Activated CD4-positive, alpha-beta T cell treated with anti-CD3 and anti-CD28 coated beads, Interleukin-2, amount 10 ng/mL, durations not matched to agents 7 days and 5 days (primary cell): ENCODE measurements at regions of chr7 and their contacts with region 1.

Region 1: DNA sequence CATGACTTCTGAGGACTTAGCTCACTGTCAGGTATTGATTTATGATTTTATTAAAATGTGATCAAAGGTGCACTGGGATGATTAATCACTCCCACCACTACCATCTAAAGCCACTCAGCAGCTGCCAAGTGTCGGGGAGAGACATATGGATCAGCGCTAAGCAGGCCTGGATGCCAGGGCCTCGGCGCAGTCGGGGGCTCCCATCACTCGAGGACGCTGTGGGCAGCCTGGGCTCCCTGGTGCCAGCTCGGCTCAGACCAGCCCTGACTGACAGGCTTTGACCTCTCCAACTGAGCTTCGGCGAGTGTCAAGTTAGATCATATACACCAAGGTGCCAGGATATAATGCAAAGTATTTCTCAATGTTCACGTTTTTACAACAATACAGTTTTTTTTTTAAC is 267.7 kb downstream of the ACTR3B start:
- DNase-seq: no peak
- H3K4me3 Mint-ChIP-seq: no peak overlapping the region
- H3K27ac Mint-ChIP-seq: no peak overlapping the region
- H3K4me1 Mint-ChIP-seq: no peaks in the 10 kb centered on the region
- H3K27me3 Mint-ChIP-seq: no peaks in the 10 kb centered on the region

Region 2: DNA sequence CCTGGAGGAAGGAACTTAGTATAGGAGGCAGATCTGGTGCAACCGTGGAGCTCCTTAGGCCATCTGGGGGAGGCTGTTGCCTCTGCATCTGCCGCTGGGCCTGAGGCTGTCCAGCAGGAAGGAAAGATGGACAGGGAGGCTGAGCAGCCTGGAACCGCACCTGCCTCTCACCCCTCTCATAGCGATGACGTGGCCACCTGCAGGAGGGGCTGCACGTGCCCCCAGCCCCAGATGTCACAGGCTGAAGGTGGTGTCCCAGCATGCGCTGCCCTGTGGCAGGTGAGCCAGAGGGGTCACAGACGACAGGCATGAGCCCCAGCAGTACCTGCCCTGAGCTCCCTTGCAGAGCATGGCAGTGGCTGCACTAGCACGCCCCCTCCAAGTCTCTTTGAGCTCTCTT is 16.2 kb after region 1 on chr7:
- CTCF ChIA-PET with region 1: interaction called, 10 read pairs
- POLR2A ChIA-PET with region 1: no interaction called
- DNase-seq: no peak
- H3K4me3 Mint-ChIP-seq: no peak overlapping the region
- H3K27ac Mint-ChIP-seq: no peak overlapping the region
- H3K4me1 Mint-ChIP-seq: no peaks in the 10 kb centered on the region
- H3K27me3 Mint-ChIP-seq: no peaks in the 10 kb centered on the region